K562 (cell line): ENCODE measurements at regions of chrX and their contacts with region 1.

Region 1: GRCh38 chrX:138986235-138986634 is 274.7 kb upstream of the FGF13 start:
- DNase-seq: no peak
- ATAC-seq: peak; percentile 36; the same call in 2 of the 3 replicates
- H3K4me3 ChIP-seq: no peak overlapping the region
- H3K27ac ChIP-seq: no peak overlapping the region
- H3K4me1 ChIP-seq: peaks cover 0 to 8% of the 10 kb centered on the region in 2 experiments; a peak in 1 of 5 replicates
- H3K27me3 ChIP-seq: no peaks in the 10 kb centered on the region
- CTCF ChIP-seq: no peak
- EP300 ChIP-seq: no peak
- POLR2A ChIP-seq: no peak
- RAD21 ChIP-seq: no peak

Region 2: DNA sequence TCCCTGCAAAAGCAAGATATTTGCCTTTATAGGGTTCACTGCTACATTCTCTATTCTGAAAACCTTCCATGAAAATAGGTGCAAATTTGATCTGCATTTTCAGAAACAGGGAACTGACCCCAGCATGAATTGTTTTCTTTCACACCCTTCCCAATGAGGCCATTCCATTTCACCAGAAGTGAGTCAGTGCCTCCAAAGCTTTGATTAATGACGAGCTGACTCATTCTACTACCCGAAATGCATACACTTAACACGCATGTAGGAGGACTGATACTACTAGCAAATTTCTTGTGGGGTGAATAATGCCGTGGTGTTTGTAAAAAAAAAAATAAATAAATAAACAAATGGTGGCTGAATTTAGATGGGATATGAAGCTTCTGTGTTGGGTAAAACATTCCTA is 127.8 kb before region 1 on chrX:
- CTCF ChIA-PET with region 1: no interaction called
- POLR2A ChIA-PET with region 1: no interaction called
- in situ Hi-C with region 1: no loop called
- intact Hi-C with region 1: loop called (anchors 10 kb)
- DNase-seq: peak; percentile 12 to 67 (median 34)
- ATAC-seq: peak; percentile 96
- H3K4me3 ChIP-seq: no peak overlapping the region
- H3K27ac ChIP-seq: peak overlapping the region; percentile 52; the same call in 1 of the 3 replicates
- H3K4me1 ChIP-seq: peaks cover 0 to 16% of the 10 kb centered on the region in 2 experiments; a peak in 3 of 5 replicates
- H3K27me3 ChIP-seq: no peaks in the 10 kb centered on the region
- CTCF ChIP-seq: no peak
- EP300 ChIP-seq: no peak
- POLR2A ChIP-seq: no peak
- RAD21 ChIP-seq: no peak

Region 3: GRCh38 chrX:138945223-138945622 is 41.0 kb before region 1 on chrX:
- CTCF ChIA-PET with region 1: no interaction called
- POLR2A ChIA-PET with region 1: no interaction called
- in situ Hi-C with region 1: no loop called
- intact Hi-C with region 1: no loop called
- DNase-seq: peak in 2 of 4 experiments; percentile 9 to 39
- ATAC-seq: peak; percentile 56
- H3K4me3 ChIP-seq: no peak overlapping the region
- H3K27ac ChIP-seq: no peak overlapping the region
- H3K4me1 ChIP-seq: peaks cover 0 to 5% of the 10 kb centered on the region in 2 experiments; a peak in 2 of 5 replicates
- H3K27me3 ChIP-seq: no peaks in the 10 kb centered on the region
- CTCF ChIP-seq: no peak
- EP300 ChIP-seq: no peak
- POLR2A ChIP-seq: no peak
- RAD21 ChIP-seq: no peak

Region 4: GRCh38 chrX:139211568-139212182 is 225.4 kb after region 1 on chrX:
- CTCF ChIA-PET with region 1: no interaction called
- POLR2A ChIA-PET with region 1: no interaction called
- in situ Hi-C with region 1: no loop called
- intact Hi-C with region 1: no loop called
- DNase-seq: peak in 3 of 4 experiments; percentile 18 to 29 (median 18)
- ATAC-seq: peak; percentile 14; the same call in 2 of the 3 replicates
- H3K4me3 ChIP-seq: no peak overlapping the region
- H3K27ac ChIP-seq: peak overlapping the region; percentile 96
- H3K4me1 ChIP-seq: peaks cover 0 to 64% of the 10 kb centered on the region in 2 experiments; a peak in 4 of 5 replicates
- H3K27me3 ChIP-seq: no peaks in the 10 kb centered on the region
- CTCF ChIP-seq: no peak
- EP300 ChIP-seq: no peak
- POLR2A ChIP-seq: 0 out of 2 replicates have a peak, but pooled peaks have one; percentile 25
- RAD21 ChIP-seq: no peak

Region 5: DNA sequence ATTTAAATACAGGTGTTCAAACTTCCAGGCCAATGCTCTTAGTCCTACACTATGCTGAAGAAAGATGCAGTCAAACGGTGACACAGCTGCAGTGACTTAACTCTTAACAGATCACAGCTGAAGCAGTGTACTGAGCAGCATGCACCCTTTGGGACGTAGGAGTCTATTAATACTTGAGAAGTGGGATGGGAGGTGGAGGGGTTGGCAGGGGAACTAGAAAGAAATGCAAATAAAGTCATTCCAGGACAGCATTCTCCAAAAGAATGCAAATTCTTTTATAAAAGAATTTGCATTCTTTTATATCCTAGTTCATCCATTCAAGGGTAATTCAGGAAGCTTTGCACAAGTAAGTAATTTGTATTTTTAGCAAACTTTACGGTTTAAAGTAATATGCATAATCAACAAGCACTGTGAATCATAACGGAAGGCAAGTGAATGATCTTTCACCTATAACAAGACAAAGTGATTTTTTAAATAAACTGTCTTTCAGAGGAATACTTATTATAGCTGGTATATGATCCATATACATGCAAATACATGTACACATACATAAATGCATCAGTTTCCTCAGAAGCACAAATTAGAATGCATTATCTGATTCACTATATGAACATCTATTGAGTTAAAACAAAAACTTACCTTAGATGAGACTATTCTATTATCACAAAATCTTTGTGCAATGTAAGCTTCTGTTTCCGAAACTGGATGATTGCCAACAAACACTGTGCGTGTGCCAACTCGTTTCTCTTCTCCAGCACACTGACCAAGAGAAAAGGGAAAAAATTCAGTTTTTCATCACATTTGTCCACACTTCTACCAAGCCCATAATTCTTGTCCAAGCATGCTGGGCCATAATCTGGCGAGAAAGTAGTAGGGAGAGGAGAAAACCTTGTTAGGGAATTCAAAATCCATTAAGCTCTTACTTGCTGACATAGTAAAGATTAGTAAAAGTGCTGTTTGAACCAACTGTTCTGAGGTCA is 840.1 kb after region 1 on chrX:
- CTCF ChIA-PET with region 1: no interaction called
- POLR2A ChIA-PET with region 1: no interaction called
- in situ Hi-C with region 1: no loop called
- intact Hi-C with region 1: no loop called
- DNase-seq: no peak
- ATAC-seq: no peak
- H3K4me3 ChIP-seq: no peak overlapping the region
- H3K27ac ChIP-seq: no peak overlapping the region
- H3K4me1 ChIP-seq: no peaks in the 10 kb centered on the region
- H3K27me3 ChIP-seq: no peaks in the 10 kb centered on the region
- CTCF ChIP-seq: no peak
- EP300 ChIP-seq: no peak
- POLR2A ChIP-seq: no peak
- RAD21 ChIP-seq: no peak